Activated CD4-positive, alpha-beta T cell treated with anti-CD3 and anti-CD28 coated beads for 36 hours (primary cell): ENCODE measurements at regions of chr5 and their contacts with region 1.

Region 1: GRCh38 chr5:77015938-77016569 is 14.2 kb upstream of the AGGF1 start:
- DNase-seq: no peak
- ATAC-seq: no peak
- H3K4me3 Mint-ChIP-seq: no peak overlapping the region
- H3K27ac Mint-ChIP-seq: no peak overlapping the region
- H3K4me1 Mint-ChIP-seq: no peaks in the 10 kb centered on the region
- H3K27me3 Mint-ChIP-seq: peaks cover 15% of the 10 kb centered on the region

Region 2: DNA sequence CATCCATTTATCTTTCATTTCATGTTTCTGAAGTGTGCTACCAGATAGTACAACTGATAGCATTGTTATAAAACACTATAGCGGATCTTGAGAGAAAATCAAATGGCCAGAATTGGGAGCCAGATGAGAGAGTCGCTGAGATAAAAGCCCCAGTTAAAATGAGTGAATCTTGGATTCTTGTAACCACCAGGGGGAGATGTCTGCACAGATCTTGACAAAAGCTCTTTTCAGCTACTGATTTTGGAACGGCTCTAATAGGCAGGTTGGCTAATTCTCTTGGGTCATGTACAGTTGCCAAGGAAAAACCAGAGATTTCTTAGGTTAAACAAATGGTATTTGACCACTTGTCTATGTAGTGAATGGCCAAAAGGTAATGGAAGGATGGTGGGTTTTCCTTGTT is 414.6 kb before region 1 on chr5:
- CTCF ChIA-PET with region 1: no interaction called
- POLR2A ChIA-PET with region 1: no interaction called
- intact Hi-C with region 1: loop called in 1 of 2 experiments (anchors 1 kb)
- DNase-seq: peak; percentile 18
- ATAC-seq: no peak
- H3K4me3 Mint-ChIP-seq: no peak overlapping the region
- H3K27ac Mint-ChIP-seq: no peak overlapping the region
- H3K4me1 Mint-ChIP-seq: peaks cover 9% of the 10 kb centered on the region
- H3K27me3 Mint-ChIP-seq: no peaks in the 10 kb centered on the region

Region 3: GRCh38 chr5:76715736-76716455 is 300.2 kb before region 1 on chr5 and contains the start of gene F2R:
- CTCF ChIA-PET with region 1: no interaction called
- POLR2A ChIA-PET with region 1: no interaction called
- intact Hi-C with region 1: loop called in 1 of 2 experiments (anchors 5 kb)
- DNase-seq: peak; percentile 72
- ATAC-seq: peak; percentile 79
- H3K4me3 Mint-ChIP-seq: peak within 1 kb of the TSS; percentile 75
- H3K27ac Mint-ChIP-seq: no peak within 1 kb of the TSS
- H3K4me1 Mint-ChIP-seq: peaks cover 22% of the 10 kb centered on the region
- H3K27me3 Mint-ChIP-seq: peaks cover 38% of the 10 kb centered on the region
- total RNA-seq, gene F2R: 1.4 TPM

Region 4: GRCh38 chr5:76841361-76841760 is 174.7 kb before region 1 on chr5:
- CTCF ChIA-PET with region 1: no interaction called
- POLR2A ChIA-PET with region 1: no interaction called
- intact Hi-C with region 1: no loop called
- DNase-seq: no peak
- ATAC-seq: no peak
- H3K4me3 Mint-ChIP-seq: no peak overlapping the region
- H3K27ac Mint-ChIP-seq: no peak overlapping the region
- H3K4me1 Mint-ChIP-seq: no peaks in the 10 kb centered on the region
- H3K27me3 Mint-ChIP-seq: no peaks in the 10 kb centered on the region

Region 5: GRCh38 chr5:76867827-76868693 is 148.0 kb before region 1 on chr5:
- CTCF ChIA-PET with region 1: interaction called, 6 read pairs
- POLR2A ChIA-PET with region 1: no interaction called
- intact Hi-C with region 1: loop called (anchors 1 kb)
- DNase-seq: peak; percentile 77
- ATAC-seq: peak; percentile 74
- H3K4me3 Mint-ChIP-seq: no peak overlapping the region
- H3K27ac Mint-ChIP-seq: no peak overlapping the region
- H3K4me1 Mint-ChIP-seq: no peaks in the 10 kb centered on the region
- H3K27me3 Mint-ChIP-seq: no peaks in the 10 kb centered on the region